Panc1 (cell line): ENCODE measurements at regions of chr20 and their contacts with region 1.

Region 1: GRCh38 chr20:40797425-40797824 is 108.4 kb upstream of the MAFB start:
- DNase-seq: no peak
- ATAC-seq: no peak
- H3K4me3 ChIP-seq: no peak overlapping the region
- H3K27ac ChIP-seq: no peak overlapping the region
- H3K4me1 ChIP-seq: no peaks in the 10 kb centered on the region
- H3K27me3 ChIP-seq: no peaks in the 10 kb centered on the region; the same call in 1 of the 2 replicates
- CTCF ChIP-seq: peak; percentile 54

Region 2: GRCh38 chr20:40781327-40782042 is 15.9 kb before region 1 on chr20:
- CTCF ChIA-PET with region 1: no interaction called
- POLR2A ChIA-PET with region 1: no interaction called
- in situ Hi-C with region 1: no loop called
- intact Hi-C with region 1: no loop called
- DNase-seq: no peak
- ATAC-seq: no peak
- H3K4me3 ChIP-seq: no peak overlapping the region
- H3K27ac ChIP-seq: no peak overlapping the region
- H3K4me1 ChIP-seq: no peaks in the 10 kb centered on the region
- H3K27me3 ChIP-seq: no peaks in the 10 kb centered on the region; the same call in 1 of the 2 replicates
- CTCF ChIP-seq: no peak

Region 3: DNA sequence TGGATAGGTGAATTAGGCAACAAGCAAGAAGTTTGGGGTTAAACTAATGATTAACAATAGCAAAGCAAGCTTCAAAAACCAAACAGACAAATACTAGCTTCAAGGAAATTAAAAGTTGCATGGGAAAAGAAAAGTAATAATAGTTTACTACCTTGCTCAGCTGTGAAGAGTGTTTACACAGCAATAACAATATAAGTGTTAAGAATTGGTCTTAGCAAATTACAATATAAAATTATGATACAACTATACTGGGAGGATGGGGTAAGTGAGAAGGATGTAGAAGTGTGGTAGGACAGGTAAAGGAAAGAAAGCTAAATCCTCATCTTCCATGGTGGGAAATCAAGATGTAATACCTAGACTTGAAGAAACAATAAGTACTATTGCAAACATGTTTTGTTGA is 29.3 kb after region 1 on chr20:
- CTCF ChIA-PET with region 1: interaction called, 12 read pairs
- POLR2A ChIA-PET with region 1: no interaction called
- in situ Hi-C with region 1: no loop called
- intact Hi-C with region 1: no loop called
- DNase-seq: no peak
- ATAC-seq: no peak
- H3K4me3 ChIP-seq: no peak overlapping the region
- H3K27ac ChIP-seq: no peak overlapping the region
- H3K4me1 ChIP-seq: no peaks in the 10 kb centered on the region
- H3K27me3 ChIP-seq: peaks cover 6% of the 10 kb centered on the region
- CTCF ChIP-seq: no peak

Region 4: GRCh38 chr20:40962730-40963504 is 165.5 kb after region 1 on chr20:
- CTCF ChIA-PET with region 1: no interaction called
- POLR2A ChIA-PET with region 1: no interaction called
- in situ Hi-C with region 1: no loop called
- intact Hi-C with region 1: loop called (anchors 5 kb)
- DNase-seq: peak; percentile 25
- ATAC-seq: peak; percentile 96
- H3K4me3 ChIP-seq: no peak overlapping the region
- H3K27ac ChIP-seq: no peak overlapping the region
- H3K4me1 ChIP-seq: no peaks in the 10 kb centered on the region; the same call in 1 of the 2 replicates
- H3K27me3 ChIP-seq: no peaks in the 10 kb centered on the region
- CTCF ChIP-seq: peak; percentile 96